Activated T-helper 1 cell treated with anti-CD3 and anti-CD28 coated beads, Interleukin-12 subunit alpha, Interleukin-12 subunit beta, Interleukin-2, Interleukin-4 antibody, amounts not matched to agents 30 ng/mL and 10 ng/mL and 1 ng/mL, durations not matched to agents 14 hours and 24 hours and 36 hours (primary cell): ENCODE measurements at regions of chr2 and their contacts with region 1.

Region 1: DNA sequence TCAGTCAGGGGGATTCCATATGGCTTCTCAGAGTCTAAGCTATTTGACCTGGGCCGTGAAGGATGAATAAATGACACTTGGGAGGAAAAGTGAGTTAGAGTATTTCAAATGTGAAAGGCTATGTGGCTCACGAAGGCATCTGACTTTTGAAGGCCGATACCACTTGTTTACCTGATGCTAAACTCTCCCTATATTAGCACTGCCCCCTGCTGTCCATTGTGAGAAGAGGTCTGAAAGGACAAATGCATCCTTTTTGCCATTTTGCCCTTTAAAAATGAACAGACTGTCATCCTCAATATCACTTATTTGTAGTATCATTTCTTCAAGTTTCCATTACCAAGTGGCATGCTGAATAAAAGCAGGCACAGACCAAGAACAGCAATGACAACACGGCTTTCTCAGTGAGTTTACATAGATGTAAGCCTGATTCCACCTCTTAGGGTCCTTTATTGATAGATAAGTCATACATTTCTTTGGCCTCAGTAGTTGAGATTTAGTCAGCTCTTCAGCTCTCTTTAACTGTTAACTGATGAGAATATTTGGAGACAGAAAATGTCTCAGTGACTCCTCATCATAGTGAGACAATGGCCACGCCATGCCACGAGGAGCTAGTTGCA is 40.1 kb downstream of the DOCK10 start:
- DNase-seq: peak; percentile 42
- H3K4me3 Mint-ChIP-seq: no peak overlapping the region
- H3K27ac Mint-ChIP-seq: peak overlapping the region; percentile 80
- H3K4me1 Mint-ChIP-seq: peaks cover 87% of the 10 kb centered on the region
- H3K27me3 Mint-ChIP-seq: no peaks in the 10 kb centered on the region

Region 2: DNA sequence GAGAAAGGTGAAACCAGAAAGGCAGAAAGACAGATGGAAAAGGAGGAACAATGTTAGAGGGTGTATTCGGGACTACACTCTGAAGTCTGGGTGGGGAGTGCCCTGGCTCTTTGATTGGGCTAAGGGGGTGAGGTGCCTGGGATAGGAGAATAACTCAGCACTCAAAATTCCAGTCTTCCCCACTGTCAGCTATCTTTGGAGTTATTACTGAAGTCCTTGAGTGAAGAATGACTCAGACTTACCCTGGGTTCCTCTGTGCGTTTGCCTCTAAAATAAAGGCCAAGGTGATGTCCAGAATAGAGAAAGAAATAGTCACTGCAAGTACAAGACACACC is 811.2 kb before region 1 on chr2:
- intact Hi-C with region 1: no loop called
- DNase-seq: no peak
- H3K4me3 Mint-ChIP-seq: no peak overlapping the region
- H3K27ac Mint-ChIP-seq: no peak overlapping the region
- H3K4me1 Mint-ChIP-seq: no peaks in the 10 kb centered on the region
- H3K27me3 Mint-ChIP-seq: peaks cover 3% of the 10 kb centered on the region

Region 3: GRCh38 chr2:224849264-224849663 is 152.9 kb before region 1 on chr2:
- intact Hi-C with region 1: loop called (anchors 1 kb)
- DNase-seq: no peak
- H3K4me3 Mint-ChIP-seq: no peak overlapping the region
- H3K27ac Mint-ChIP-seq: no peak overlapping the region
- H3K4me1 Mint-ChIP-seq: peaks cover 12% of the 10 kb centered on the region
- H3K27me3 Mint-ChIP-seq: no peaks in the 10 kb centered on the region

Region 4: GRCh38 chr2:224946895-224947294 is 55.3 kb before region 1 on chr2:
- intact Hi-C with region 1: loop called (anchors 2 kb)
- DNase-seq: no peak
- H3K4me3 Mint-ChIP-seq: peak overlapping the region; percentile 90
- H3K27ac Mint-ChIP-seq: peak overlapping the region; percentile 96
- H3K4me1 Mint-ChIP-seq: peaks cover 91% of the 10 kb centered on the region
- H3K27me3 Mint-ChIP-seq: no peaks in the 10 kb centered on the region

Region 5: GRCh38 chr2:224982910-224983711 is 19.0 kb before region 1 on chr2:
- intact Hi-C with region 1: loop called (anchors 1 kb)
- DNase-seq: peak; percentile 45
- H3K4me3 Mint-ChIP-seq: peak overlapping the region; percentile 80
- H3K27ac Mint-ChIP-seq: peak overlapping the region; percentile 96
- H3K4me1 Mint-ChIP-seq: peaks cover 86% of the 10 kb centered on the region
- H3K27me3 Mint-ChIP-seq: no peaks in the 10 kb centered on the region